ENCODE measurements at regions of chr20 and their contacts with region 1.

Region 1: DNA sequence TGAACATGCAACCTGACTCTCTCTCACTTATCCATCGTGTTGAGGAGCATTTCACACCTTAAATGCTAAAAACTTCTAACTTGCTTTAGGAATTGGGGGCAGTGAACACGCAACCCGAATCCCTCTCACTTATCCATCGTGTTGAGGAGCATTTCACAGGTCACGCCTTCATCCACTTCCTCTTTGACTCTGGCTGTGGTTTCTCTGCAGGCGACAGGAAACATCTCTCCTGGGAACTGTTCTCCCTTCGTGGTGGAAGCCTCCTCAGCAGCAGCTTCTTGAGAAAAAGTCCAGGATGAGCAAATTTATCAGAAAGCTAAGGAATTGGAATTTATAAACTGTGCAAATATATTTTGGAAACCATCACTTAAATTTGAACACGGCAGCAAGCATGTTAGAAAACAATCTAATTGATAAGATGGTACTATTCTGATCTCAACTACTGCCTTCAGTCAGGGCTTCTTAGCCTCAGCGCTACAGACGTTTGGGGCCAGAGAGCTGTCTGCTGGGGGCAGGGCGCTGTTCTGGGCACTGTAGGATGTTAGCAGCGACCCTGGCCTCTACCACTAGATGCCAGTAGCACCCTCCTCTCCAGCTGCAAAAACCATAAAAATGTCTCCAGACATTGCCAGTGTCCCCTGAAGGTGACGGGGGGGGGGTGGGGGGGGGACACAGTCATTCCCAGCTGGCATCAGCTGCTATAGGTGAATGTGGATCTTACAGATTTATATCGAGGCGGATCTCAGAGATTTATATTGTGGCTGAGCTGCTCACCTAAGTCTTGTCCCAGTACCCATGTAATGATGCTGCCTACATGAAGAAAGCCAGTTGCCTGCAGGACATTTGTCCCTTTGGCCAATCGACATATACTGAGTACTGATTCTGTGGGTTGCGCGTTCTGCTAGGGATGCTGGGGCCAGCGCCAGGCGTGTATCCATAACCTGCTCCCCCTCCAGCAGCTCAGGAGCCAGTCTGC is 26.2 kb downstream of the CTCFL start:
- DNase-seq: peak in 2 of 10 donors; percentile 34 to 86

Region 2: DNA sequence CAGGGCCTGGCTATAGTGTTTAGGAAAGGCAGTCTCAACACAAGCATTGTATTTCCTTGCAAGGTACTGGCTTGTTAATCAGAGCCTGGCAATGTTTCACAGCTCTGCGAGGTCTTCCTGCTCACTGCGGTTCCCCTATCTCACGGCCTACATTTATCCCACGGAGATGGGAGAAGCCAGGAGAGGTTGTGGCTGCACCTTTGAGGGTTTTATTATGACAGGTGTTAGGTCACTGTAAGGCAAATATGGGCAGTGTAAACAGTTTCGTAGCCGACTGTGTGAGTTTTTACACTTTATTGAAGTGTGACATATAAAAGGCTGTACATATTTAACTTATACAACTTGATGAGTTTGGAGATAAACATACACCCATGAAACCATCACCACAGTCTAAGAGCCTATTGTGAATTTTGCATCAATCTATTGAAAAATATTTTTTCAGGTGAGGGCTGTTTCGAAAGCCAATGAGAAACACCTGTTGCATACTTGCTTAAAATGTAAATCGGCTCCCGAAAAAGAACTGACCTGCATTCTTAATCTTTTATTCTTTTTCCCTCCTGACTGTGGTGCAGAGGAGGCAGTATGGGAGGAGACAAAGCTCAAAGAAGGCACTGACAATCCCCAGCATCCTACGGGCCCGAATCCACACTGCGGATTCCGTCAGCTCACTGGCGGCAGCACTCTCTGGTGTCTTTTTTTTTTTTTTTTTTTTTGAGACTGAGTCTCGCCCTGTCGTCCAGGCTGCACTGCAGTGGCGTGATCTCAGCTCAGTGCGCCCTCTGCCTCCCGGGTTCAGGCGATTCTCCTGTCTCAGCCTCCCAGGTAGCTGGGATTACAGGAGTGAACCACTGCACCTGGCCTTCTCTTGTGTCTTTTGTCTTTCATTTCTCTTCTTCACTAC is 115.0 kb before region 1 on chr20:
- intact Hi-C with region 1: loop called (anchors 1 kb)
- DNase-seq: peak in 2 of 10 donors; percentile 48 to 57

Region 3: GRCh38 chr20:57432874-57433491 is 65.7 kb before region 1 on chr20:
- intact Hi-C with region 1: loop called (anchors 10 kb)
- DNase-seq: peak in 3 of 10 donors; percentile 43 to 73 (median 61)

Region 4: GRCh38 chr20:57540890-57541580 is 42.3 kb after region 1 on chr20:
- intact Hi-C with region 1: no loop called
- DNase-seq: no peak

Measured in posterior cingulate gyrus (tissue), 11 donors.